ENCODE measurements at regions of chr1 and their contacts with region 1.

Region 1: DNA sequence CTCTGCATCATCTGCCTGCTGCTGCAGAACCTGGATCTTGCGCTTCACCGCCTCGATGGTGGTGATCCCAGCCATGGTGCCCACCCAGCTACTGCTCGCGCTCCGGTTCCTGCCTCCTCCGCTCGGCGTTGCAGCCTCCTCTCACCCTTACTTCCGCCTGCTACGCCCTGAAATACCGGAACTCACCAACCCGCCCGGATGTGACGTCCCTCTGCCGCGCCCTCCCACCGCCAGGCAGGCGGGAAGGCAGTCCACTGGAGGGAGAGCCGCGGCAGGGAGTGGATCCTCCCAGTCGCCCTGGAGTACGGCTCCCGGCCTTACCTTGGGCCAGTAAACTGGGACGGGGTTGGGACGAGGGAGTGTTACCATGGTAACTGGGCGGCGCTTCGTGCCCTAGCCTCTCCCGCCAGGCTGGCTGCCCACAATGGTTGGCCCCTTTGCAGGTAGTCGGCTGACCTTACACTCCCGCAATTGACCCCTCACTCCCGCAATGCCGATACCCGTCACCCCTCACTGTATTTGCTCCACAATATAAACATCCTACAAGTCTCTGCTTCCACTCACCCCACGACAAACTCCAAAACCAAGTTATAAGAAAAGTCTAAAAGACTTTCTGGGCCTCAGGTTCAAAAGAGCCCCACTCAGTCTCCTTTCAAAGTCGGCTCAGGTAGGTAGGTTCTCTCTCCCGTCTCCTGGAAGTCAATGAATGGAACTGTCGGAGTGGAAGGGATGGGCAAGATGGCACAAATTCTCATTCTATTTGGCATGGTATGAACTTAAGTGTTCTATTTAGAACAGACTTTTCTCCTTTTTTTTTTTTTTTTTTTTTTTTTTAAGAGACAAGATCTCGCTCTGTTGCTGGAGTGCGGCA is 8.6 kb downstream of the TPM3 start:
- DNase-seq: peak; percentile 94
- H3K4me3 ChIP-seq: peak overlapping the region; percentile 86
- H3K27ac ChIP-seq: peak overlapping the region; percentile 83
- H3K4me1 ChIP-seq: peaks cover 33% of the 10 kb centered on the region
- CTCF ChIP-seq: no peak

Region 2: DNA sequence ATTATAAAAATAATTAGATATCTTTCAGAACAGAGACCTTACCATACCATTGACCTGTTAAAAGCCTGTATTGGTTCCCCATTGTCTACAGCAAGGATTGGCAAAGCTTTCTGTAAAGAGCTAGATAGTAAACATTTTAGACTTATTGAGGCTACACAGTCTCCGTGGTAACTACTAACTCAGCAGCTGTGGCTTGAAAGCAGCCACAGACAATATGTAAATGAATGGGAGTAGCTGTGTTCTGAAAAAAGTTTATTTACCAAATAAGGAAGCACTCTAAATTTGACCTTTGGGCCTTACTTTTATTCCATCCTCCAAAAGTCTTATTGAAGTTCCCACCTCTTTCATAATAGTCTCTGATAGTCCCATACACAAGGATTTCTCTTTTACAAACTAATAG is 68.1 kb before region 1 on chr1:
- CTCF ChIA-PET with region 1: no interaction called
- POLR2A ChIA-PET with region 1: no interaction called
- intact Hi-C with region 1: no loop called
- DNase-seq: no peak
- H3K4me3 ChIP-seq: no peak overlapping the region
- H3K27ac ChIP-seq: no peak overlapping the region
- H3K4me1 ChIP-seq: no peaks in the 10 kb centered on the region
- CTCF ChIP-seq: no peak

Region 3: GRCh38 chr1:154220071-154220969 is 37.0 kb after region 1 on chr1 and contains the start of gene UBAP2L:
- CTCF ChIA-PET with region 1: no interaction called
- POLR2A ChIA-PET with region 1: interaction called, 4 read pairs
- intact Hi-C with region 1: loop called (anchors 2 kb)
- DNase-seq: peak; percentile 100
- H3K4me3 ChIP-seq: peak within 1 kb of the TSS; percentile 96
- H3K27ac ChIP-seq: peak within 1 kb of the TSS; percentile 75
- H3K4me1 ChIP-seq: peaks cover 41% of the 10 kb centered on the region
- CTCF ChIP-seq: no peak
- total RNA-seq, gene UBAP2L: 80.4 and 98.6 TPM in 2 replicates